ENCODE measurements at regions of chr3 and their contacts with region 1.

Region 1: DNA sequence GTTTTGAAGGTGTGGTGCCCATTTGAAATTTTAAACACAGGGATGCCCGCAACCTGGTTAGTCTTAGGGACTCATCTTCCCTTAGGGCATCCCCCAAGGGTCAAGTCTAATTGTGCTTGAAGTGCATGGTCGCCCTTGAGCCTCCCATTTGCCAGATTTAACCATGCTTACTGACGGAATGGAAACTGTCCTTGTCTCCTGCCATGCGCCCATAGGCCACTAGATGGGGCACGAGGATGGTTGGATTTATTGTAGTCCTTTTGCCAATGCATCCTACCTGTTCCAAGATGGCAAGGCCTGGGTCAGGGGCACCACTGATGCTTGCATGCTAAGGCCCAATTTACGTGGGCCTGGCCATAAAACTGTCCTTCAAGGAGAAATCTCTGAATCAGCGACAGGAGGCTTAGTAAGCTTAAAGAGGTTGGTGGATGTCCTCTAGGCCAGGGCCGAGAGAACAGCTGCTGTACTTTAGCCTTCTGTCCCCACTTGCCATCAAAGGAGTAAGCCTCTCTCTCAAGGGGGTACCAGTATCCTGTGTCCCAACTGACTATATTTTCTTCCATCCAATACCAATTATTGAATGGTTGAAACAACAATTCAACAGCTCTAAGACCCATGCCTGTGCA is 355.4 kb downstream of the OTOL1 start:
- DNase-seq: peak; percentile 87
- ATAC-seq: 0 out of 2 replicates have a peak, but pooled peaks have one; percentile 8
- H3K4me3 ChIP-seq: no peak overlapping the region
- H3K27ac ChIP-seq: no peak overlapping the region
- H3K4me1 ChIP-seq: peaks cover 23% of the 10 kb centered on the region
- H3K27me3 ChIP-seq: no peaks in the 10 kb centered on the region
- CTCF ChIP-seq: peak; percentile 85

Region 2: DNA sequence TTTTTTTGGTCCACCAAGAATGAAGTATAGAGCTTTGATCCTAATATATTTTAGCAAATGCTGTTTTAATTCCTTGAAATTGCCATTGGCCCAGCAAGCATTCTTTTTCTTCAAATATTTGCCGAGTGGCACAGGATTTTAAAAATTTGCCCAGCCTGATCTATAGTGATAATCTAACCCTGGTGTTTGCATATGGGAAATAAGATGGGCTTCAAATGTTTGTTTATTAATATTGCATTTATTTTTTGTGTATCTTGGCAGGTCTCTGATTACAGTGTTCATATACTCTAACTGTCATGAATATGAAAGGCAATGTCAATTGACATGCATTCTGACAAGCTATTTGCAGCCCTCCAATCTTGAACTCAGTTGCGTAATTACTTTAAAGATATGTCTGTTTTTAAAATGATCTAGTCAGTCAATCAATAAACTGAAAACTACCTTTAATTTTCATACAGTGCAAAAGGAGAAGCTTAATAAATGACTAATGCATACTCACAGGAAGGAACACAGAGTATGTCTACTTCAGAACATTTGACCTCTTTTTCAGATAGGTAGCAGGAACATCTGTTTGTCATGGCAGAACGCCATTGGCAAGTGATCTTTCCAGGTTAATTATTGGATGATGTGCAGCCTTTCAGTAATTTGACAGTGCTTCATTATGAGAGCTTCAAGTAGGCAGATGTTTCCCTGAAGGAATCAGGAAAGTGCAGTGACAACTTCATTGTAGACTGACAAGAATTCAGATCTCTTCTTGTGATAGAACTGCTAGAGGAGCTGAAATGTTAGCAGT is 30.7 kb before region 1 on chr3:
- CTCF ChIA-PET with region 1: no interaction called
- POLR2A ChIA-PET with region 1: no interaction called
- intact Hi-C with region 1: no loop called
- DNase-seq: peak; percentile 37
- ATAC-seq: peak; percentile 83
- H3K4me3 ChIP-seq: no peak overlapping the region
- H3K27ac ChIP-seq: no peak overlapping the region
- H3K4me1 ChIP-seq: peaks cover 8% of the 10 kb centered on the region; the same call in 1 of the 2 replicates
- H3K27me3 ChIP-seq: no peaks in the 10 kb centered on the region
- CTCF ChIP-seq: no peak

Region 3: GRCh38 chr3:161879470-161879869 is 27.4 kb after region 1 on chr3:
- CTCF ChIA-PET with region 1: no interaction called
- POLR2A ChIA-PET with region 1: no interaction called
- intact Hi-C with region 1: no loop called
- DNase-seq: no peak
- ATAC-seq: no peak
- H3K4me3 ChIP-seq: no peak overlapping the region
- H3K27ac ChIP-seq: no peak overlapping the region
- H3K4me1 ChIP-seq: no peaks in the 10 kb centered on the region
- H3K27me3 ChIP-seq: no peaks in the 10 kb centered on the region
- CTCF ChIP-seq: no peak

Region 4: GRCh38 chr3:161890147-161890625 is 38.1 kb after region 1 on chr3:
- CTCF ChIA-PET with region 1: no interaction called
- POLR2A ChIA-PET with region 1: no interaction called
- intact Hi-C with region 1: loop called (anchors 1 kb)
- DNase-seq: peak; percentile 98
- ATAC-seq: peak; percentile 100
- H3K4me3 ChIP-seq: no peak overlapping the region
- H3K27ac ChIP-seq: peak overlapping the region; percentile 92
- H3K4me1 ChIP-seq: peaks cover 25% of the 10 kb centered on the region
- H3K27me3 ChIP-seq: no peaks in the 10 kb centered on the region
- CTCF ChIP-seq: no peak

Region 5: GRCh38 chr3:162022629-162023310 is 170.7 kb after region 1 on chr3:
- CTCF ChIA-PET with region 1: no interaction called
- POLR2A ChIA-PET with region 1: no interaction called
- intact Hi-C with region 1: loop called (anchors 2 kb)
- DNase-seq: peak; percentile 43
- ATAC-seq: peak; percentile 76
- H3K4me3 ChIP-seq: no peak overlapping the region
- H3K27ac ChIP-seq: peak overlapping the region; percentile 38
- H3K4me1 ChIP-seq: peaks cover 27% of the 10 kb centered on the region
- H3K27me3 ChIP-seq: no peaks in the 10 kb centered on the region
- CTCF ChIP-seq: no peak

Region 6: GRCh38 chr3:162072656-162073164 is 220.7 kb after region 1 on chr3:
- CTCF ChIA-PET with region 1: no interaction called
- POLR2A ChIA-PET with region 1: interaction called, 11 read pairs
- intact Hi-C with region 1: no loop called
- DNase-seq: no peak
- ATAC-seq: peak; percentile 18; the same call in 1 of the 2 replicates
- H3K4me3 ChIP-seq: no peak overlapping the region
- H3K27ac ChIP-seq: no peak overlapping the region
- H3K4me1 ChIP-seq: no peaks in the 10 kb centered on the region
- H3K27me3 ChIP-seq: no peaks in the 10 kb centered on the region
- CTCF ChIP-seq: no peak

Region 7: GRCh38 chr3:162489853-162490252 is 637.8 kb after region 1 on chr3:
- CTCF ChIA-PET with region 1: no interaction called
- POLR2A ChIA-PET with region 1: no interaction called
- intact Hi-C with region 1: loop called (anchors 2 kb)
- DNase-seq: peak; percentile 53
- ATAC-seq: peak; percentile 60
- H3K4me3 ChIP-seq: no peak overlapping the region
- H3K27ac ChIP-seq: no peak overlapping the region
- H3K4me1 ChIP-seq: peaks cover 21% of the 10 kb centered on the region
- H3K27me3 ChIP-seq: no peaks in the 10 kb centered on the region
- CTCF ChIP-seq: peak; percentile 57

Region 8: DNA sequence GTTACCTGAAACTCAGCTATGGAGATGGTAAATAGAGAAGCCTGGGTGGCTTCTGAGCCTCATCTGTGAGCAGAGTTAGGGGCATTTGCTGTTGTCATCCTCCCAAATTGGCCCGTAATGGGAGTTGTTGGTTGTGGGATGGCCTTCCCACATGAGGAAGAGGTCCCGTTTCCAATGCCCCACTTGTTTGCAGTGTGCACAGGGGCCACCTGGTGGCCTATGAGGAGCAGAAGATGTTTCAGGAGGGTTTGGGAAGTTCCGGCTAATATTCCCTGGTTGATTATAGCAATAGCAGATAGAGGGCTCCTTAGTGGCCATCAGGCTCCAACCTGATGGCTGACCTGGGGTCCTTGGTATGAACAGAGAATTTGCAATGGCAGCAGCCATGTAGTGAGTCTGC is 1191.0 kb after region 1 on chr3:
- CTCF ChIA-PET with region 1: no interaction called
- POLR2A ChIA-PET with region 1: no interaction called
- intact Hi-C with region 1: loop called (anchors 1 kb)
- DNase-seq: peak; percentile 62
- ATAC-seq: peak; percentile 76
- H3K4me3 ChIP-seq: no peak overlapping the region
- H3K27ac ChIP-seq: no peak overlapping the region
- H3K4me1 ChIP-seq: no peaks in the 10 kb centered on the region
- H3K27me3 ChIP-seq: no peaks in the 10 kb centered on the region
- CTCF ChIP-seq: peak; percentile 81

Measured in PC-3 (cell line).